ENCODE measurements at regions of chr1 and their contacts with region 1.

Region 1: GRCh38 chr1:150363426-150364230 is at the start of gene RPRD2:
- DNase-seq: peak; percentile 99
- ATAC-seq: peak; percentile 99
- total RNA-seq, gene RPRD2: 23.6 TPM

Region 2: GRCh38 chr1:150383631-150384324 is 20.1 kb after region 1 on chr1:
- intact Hi-C with region 1: no loop called
- DNase-seq: no peak
- ATAC-seq: no peak

Region 3: DNA sequence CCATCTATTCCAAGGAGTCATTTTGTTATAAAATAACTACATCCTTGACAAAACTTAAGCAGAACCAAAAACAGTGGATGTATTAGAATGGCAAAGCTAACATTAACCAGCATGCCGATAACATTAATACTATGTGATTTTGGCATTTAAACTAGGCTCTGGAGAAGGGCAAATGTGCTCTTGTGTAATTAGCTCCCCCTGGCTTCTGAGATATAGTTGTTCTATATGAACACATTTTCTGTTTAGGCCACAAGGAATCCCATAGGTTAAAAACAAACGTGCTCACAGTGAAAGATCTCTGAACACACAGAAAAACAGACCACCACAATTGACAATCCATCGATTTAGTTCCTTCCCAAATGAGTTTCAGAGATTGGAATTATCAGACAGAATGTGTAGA is 66.2 kb after region 1 on chr1:
- intact Hi-C with region 1: loop called (anchors 10 kb)
- DNase-seq: no peak
- ATAC-seq: no peak